ENCODE measurements at regions of chr7 and their contacts with region 1.

Region 1: DNA sequence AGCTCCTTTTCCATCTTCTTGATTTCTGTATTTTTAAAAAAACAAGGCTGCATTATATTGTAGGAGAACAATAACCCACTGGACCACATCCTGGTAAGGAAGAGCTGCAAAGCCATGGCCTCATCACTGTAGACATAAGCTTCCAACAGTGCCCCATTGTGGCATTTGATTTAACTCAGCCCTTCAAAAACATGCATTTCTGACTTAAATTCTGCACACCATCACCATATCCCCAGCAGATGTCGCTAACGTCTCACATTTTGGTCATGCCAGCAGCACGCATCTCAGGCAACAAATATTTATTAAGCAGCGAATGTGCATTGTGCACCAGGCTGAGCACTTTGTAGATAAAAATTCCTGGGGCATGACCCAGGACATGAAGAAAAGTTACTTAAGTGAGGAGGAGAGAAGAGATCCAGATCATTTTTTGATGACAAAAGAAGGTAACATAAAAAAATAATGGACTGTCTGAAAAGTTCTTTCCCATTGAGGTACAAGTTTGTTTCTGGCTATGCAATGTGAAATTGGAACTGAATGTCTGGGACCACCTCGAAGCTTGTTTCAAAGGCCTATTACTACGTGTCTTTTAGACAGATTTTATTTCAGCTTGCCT is 164.6 kb upstream of the CDCA7L start:
- DNase-seq: peak; percentile 59 to 68
- H3K4me3 ChIP-seq: no peak overlapping the region
- H3K27ac ChIP-seq: no peak overlapping the region
- H3K4me1 ChIP-seq: 0 out of 7 replicates have a peak, but pooled peaks cover 0 to 2% (median 0%) of the 10 kb centered on the region in 4 experiments
- H3K27me3 ChIP-seq: no peaks in the 10 kb centered on the region
- CTCF ChIP-seq: peak; percentile 44 to 94 (median 93)
- EP300 ChIP-seq: no peak
- POLR2A ChIP-seq: no peak
- RAD21 ChIP-seq: peak; percentile 99

Region 2: GRCh38 chr7:22137466-22137865 is 27.1 kb after region 1 on chr7:
- CTCF ChIA-PET with region 1: interaction called, 58 read pairs
- POLR2A ChIA-PET with region 1: no interaction called
- DNase-seq: no peak
- H3K4me3 ChIP-seq: no peak overlapping the region
- H3K27ac ChIP-seq: no peak overlapping the region
- H3K4me1 ChIP-seq: peaks cover 4 to 12% (median 7%) of the 10 kb centered on the region in 4 experiments
- H3K27me3 ChIP-seq: no peaks in the 10 kb centered on the region
- CTCF ChIP-seq: no peak
- EP300 ChIP-seq: no peak
- POLR2A ChIP-seq: no peak
- RAD21 ChIP-seq: no peak

Region 3: GRCh38 chr7:22202141-22202540 is 91.8 kb after region 1 on chr7:
- CTCF ChIA-PET with region 1: interaction called, 31 read pairs
- POLR2A ChIA-PET with region 1: no interaction called
- DNase-seq: no peak
- H3K4me3 ChIP-seq: no peak overlapping the region
- H3K27ac ChIP-seq: no peak overlapping the region
- H3K4me1 ChIP-seq: no peaks in the 10 kb centered on the region
- H3K27me3 ChIP-seq: no peaks in the 10 kb centered on the region
- CTCF ChIP-seq: no peak
- EP300 ChIP-seq: no peak
- POLR2A ChIP-seq: no peak
- RAD21 ChIP-seq: no peak

Region 4: DNA sequence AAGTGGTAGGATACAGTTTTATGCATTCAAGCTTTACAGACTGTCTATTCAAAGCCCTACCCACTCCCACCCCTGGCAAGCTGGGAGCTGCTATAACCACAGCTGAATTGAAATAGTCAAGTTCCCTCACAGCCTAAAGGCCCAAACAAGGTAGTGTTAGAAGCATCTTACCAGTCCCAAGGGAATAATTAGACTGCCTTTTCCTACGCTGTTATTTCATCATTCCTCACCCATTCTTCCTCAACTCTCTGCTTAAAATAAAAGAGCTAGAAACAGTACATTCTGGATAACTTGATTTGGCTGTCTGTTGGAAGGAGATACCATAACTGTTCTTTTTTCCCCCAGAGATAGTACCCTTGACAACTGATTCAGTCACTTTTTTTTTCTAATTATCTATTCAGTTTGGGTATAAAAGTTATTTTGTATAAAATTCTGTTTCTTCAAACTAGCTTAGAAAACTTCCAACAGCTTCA is 192.7 kb after region 1 on chr7:
- CTCF ChIA-PET with region 1: interaction called, 27 read pairs
- POLR2A ChIA-PET with region 1: no interaction called
- DNase-seq: no peak
- H3K4me3 ChIP-seq: no peak overlapping the region
- H3K27ac ChIP-seq: no peak overlapping the region
- H3K4me1 ChIP-seq: peaks cover 0 to 2% (median 0%) of the 10 kb centered on the region in 4 experiments; a peak in 1 of 7 replicates
- H3K27me3 ChIP-seq: peaks cover 0 to 1% (median 0%) of the 10 kb centered on the region in 4 experiments; a peak in 1 of 7 replicates
- CTCF ChIP-seq: no peak
- EP300 ChIP-seq: no peak
- POLR2A ChIP-seq: no peak
- RAD21 ChIP-seq: no peak

Region 5: GRCh38 chr7:22460360-22460983 is 350.1 kb after region 1 on chr7:
- CTCF ChIA-PET with region 1: interaction called, 16 read pairs
- POLR2A ChIA-PET with region 1: no interaction called
- DNase-seq: no peak
- H3K4me3 ChIP-seq: no peak overlapping the region
- H3K27ac ChIP-seq: no peak overlapping the region
- H3K4me1 ChIP-seq: no peaks in the 10 kb centered on the region
- H3K27me3 ChIP-seq: no peaks in the 10 kb centered on the region
- CTCF ChIP-seq: no peak
- EP300 ChIP-seq: no peak
- POLR2A ChIP-seq: no peak
- RAD21 ChIP-seq: peak in 1 of 2 experiments; percentile 9; a peak in 1 of 4 replicates

Region 6: DNA sequence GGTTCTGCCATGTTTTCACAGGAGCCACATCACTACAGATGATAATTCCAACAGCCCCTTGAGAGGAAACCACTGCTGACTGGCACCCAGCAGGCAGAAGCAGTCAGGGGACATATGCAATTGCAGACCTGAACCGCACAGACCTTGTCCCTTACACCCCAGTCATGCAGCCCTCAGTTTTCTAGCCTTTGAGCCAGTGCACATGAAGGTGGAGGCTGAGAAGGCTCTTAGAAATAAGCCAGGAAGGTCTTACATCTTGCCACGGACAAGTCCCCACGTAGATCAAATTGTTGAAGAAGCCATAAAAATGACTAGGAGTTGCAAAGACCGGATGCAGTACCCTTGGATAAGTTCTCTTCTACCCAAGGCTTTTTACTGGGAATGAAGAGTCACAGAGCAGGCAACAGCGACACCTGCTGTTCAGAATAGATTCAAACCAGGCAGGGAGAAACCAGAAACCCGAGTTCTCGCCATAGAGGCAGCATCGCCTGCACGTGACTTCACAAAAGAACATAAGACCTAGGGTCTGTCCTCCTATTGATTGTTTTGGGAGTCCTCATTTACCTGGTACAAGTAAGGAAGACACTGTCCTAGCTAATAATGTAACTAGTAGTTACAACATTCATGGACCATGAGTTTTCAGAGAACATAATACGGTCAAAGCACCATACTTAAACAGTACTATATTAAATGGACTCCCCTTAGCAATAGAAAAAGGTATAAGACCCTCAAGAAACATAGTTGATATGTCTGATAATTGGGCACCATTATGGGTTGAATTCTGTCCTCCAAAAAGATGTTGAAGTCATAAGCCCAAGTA is 378.5 kb after region 1 on chr7:
- CTCF ChIA-PET with region 1: interaction called, 81 read pairs
- POLR2A ChIA-PET with region 1: no interaction called
- DNase-seq: peak; percentile 57 to 87
- H3K4me3 ChIP-seq: no peak overlapping the region
- H3K27ac ChIP-seq: no peak overlapping the region
- H3K4me1 ChIP-seq: peaks cover 4 to 10% (median 8%) of the 10 kb centered on the region in 4 experiments; a peak in 6 of 7 replicates
- H3K27me3 ChIP-seq: no peaks in the 10 kb centered on the region
- CTCF ChIP-seq: peak; percentile 46 to 92 (median 90)
- EP300 ChIP-seq: no peak
- POLR2A ChIP-seq: no peak
- RAD21 ChIP-seq: peak; percentile 98 to 99